H1 (cell line): ENCODE measurements at regions of chr2 and their contacts with region 1.

Region 1: GRCh38 chr2:181573140-181573736 is 83.7 kb downstream of the CERKL start:
- DNase-seq: no peak
- H3K4me3 ChIP-seq: no peak overlapping the region
- H3K27ac ChIP-seq: no peak overlapping the region
- H3K4me1 ChIP-seq: no peaks in the 10 kb centered on the region
- H3K27me3 ChIP-seq: no peaks in the 10 kb centered on the region
- CTCF ChIP-seq: peak in 2 of 3 experiments; percentile 46 to 48; a peak in 2 of 4 replicates
- EP300 ChIP-seq: no peak
- POLR2A ChIP-seq: no peak
- RAD21 ChIP-seq: peak; percentile 73 to 76

Region 2: DNA sequence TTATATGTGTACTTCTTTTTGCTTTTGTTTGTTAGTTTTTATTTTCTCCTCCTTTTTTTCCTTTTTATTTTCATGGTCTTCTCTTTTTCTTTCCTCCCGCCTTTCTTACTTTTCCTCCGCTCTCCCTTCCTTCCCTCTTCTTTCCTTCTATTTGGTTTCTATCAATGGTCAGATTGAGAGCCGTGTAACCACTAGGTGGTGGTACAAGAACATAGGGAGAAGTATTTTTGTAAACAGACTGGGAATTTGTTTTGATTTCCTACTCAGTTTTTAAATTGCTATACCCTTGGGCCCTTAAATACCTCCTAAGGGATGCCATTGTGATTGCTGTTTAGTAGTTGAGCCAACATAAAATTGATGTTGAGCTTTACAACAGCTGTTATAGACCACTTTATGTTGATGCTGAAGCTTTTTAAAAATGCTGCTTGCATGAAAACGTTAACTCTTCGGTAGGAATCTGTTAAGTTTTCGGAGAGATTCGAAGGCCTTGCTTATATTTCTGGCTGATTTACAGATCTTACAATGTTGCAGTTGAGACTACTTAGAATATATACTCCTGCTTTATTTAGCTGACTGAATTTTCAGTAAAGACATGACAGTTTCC is 468.6 kb before region 1 on chr2:
- CTCF ChIA-PET with region 1: interaction called, 10 read pairs
- POLR2A ChIA-PET with region 1: no interaction called
- DNase-seq: no peak
- H3K4me3 ChIP-seq: no peak overlapping the region
- H3K27ac ChIP-seq: no peak overlapping the region
- H3K4me1 ChIP-seq: peaks cover 0 to 5% (median 3%) of the 10 kb centered on the region in 4 experiments; a peak in 4 of 7 replicates
- H3K27me3 ChIP-seq: no peaks in the 10 kb centered on the region
- CTCF ChIP-seq: peak in 2 of 3 experiments; percentile 65 to 66; a peak in 3 of 4 replicates
- EP300 ChIP-seq: no peak
- POLR2A ChIP-seq: no peak
- RAD21 ChIP-seq: peak; percentile 87 to 88

Region 3: GRCh38 chr2:181483876-181484275 is 89.4 kb before region 1 on chr2:
- CTCF ChIA-PET with region 1: no interaction called
- POLR2A ChIA-PET with region 1: no interaction called
- DNase-seq: no peak
- H3K4me3 ChIP-seq: no peak overlapping the region
- H3K27ac ChIP-seq: no peak overlapping the region
- H3K4me1 ChIP-seq: no peaks in the 10 kb centered on the region
- H3K27me3 ChIP-seq: no peaks in the 10 kb centered on the region
- CTCF ChIP-seq: no peak
- EP300 ChIP-seq: no peak
- POLR2A ChIP-seq: no peak
- RAD21 ChIP-seq: no peak

Region 4: GRCh38 chr2:181586569-181587081 is 13.4 kb after region 1 on chr2:
- CTCF ChIA-PET with region 1: interaction called, 23 read pairs
- POLR2A ChIA-PET with region 1: no interaction called
- DNase-seq: no peak
- H3K4me3 ChIP-seq: no peak overlapping the region
- H3K27ac ChIP-seq: no peak overlapping the region
- H3K4me1 ChIP-seq: peaks cover 0 to 7% (median 0%) of the 10 kb centered on the region in 4 experiments; a peak in 2 of 7 replicates
- H3K27me3 ChIP-seq: no peaks in the 10 kb centered on the region
- CTCF ChIP-seq: no peak
- EP300 ChIP-seq: no peak
- POLR2A ChIP-seq: no peak
- RAD21 ChIP-seq: no peak

Region 5: DNA sequence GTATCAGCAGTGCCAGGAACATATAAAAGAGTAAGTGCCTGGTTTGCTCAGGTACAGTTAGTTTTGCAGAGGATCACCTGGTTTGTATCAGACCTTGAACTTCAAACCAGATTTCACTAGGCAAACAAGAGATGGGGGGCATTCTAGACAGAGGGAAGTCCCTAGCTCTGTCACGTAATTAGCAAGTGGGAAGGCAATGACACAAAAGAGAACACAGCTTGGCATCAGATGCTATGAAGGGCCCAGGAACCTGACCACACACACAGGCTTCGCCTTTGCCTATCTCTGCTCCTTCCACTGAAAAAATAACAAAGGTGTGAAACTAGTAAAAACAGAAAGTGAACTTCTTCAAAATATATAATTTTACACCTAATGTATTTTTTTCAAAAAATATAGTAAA is 21.1 kb after region 1 on chr2:
- CTCF ChIA-PET with region 1: interaction called, 10 read pairs
- POLR2A ChIA-PET with region 1: no interaction called
- DNase-seq: no peak
- H3K4me3 ChIP-seq: no peak overlapping the region
- H3K27ac ChIP-seq: no peak overlapping the region
- H3K4me1 ChIP-seq: no peaks in the 10 kb centered on the region
- H3K27me3 ChIP-seq: no peaks in the 10 kb centered on the region
- CTCF ChIP-seq: no peak
- EP300 ChIP-seq: no peak
- POLR2A ChIP-seq: no peak
- RAD21 ChIP-seq: no peak

Region 6: DNA sequence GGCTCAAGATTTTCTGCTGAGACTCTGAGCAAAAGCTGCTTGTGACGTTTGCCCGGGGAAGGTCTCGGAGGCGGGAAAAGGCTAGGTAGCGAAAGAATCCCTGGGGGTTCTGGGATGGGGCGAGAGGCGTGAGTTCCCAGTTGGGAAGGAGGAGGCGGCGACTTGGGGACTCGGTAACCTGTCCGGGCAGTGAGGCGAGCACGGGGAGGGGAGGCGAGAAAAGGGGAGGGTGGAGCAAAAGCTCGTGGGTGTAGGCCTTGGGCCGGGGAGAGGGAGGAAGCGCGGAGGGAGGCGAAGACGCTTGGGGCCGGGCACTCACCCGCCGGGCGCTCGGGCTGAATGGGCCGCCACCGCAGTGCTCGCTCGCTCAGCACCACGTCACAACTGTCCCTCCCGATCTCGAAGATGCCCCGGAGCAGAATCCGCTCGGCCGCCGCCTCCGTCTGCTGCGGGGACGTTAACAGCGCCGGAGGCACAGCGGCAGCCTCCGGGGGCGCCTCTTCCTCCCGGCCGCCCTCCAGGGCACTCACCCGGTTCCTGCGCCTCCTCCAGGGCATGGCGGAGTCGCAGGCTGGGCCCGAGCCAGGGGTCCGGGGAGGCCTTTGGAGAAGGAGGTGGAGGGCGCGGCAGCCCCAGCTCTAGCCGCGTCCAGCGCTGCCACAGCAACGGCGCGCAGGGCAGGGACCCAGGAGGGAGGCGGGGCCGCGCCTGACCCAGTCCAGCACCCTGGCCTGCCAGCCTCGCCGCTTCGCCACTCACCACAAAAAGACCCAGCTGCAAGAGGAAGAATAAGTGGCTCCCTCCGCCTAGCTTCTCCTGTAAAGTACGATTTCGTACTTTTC is 83.4 kb after region 1 on chr2 and contains the start of gene CERKL:
- CTCF ChIA-PET with region 1: interaction called, 12 read pairs
- POLR2A ChIA-PET with region 1: no interaction called
- DNase-seq: peak; percentile 66 to 83
- H3K4me3 ChIP-seq: peak within 1 kb of the TSS; percentile 41 to 79 (median 65)
- H3K27ac ChIP-seq: no peak within 1 kb of the TSS
- H3K4me1 ChIP-seq: peaks cover 4 to 11% (median 7%) of the 10 kb centered on the region in 4 experiments; a peak in 5 of 7 replicates
- H3K27me3 ChIP-seq: peaks cover 23 to 53% (median 45%) of the 10 kb centered on the region in 4 experiments
- CTCF ChIP-seq: peak in 2 of 3 experiments; percentile 3 to 27; a peak in 2 of 4 replicates
- EP300 ChIP-seq: no peak
- POLR2A ChIP-seq: no peak
- RAD21 ChIP-seq: no peak
- total RNA-seq, gene CERKL: not detected in 2 replicates

Region 7: DNA sequence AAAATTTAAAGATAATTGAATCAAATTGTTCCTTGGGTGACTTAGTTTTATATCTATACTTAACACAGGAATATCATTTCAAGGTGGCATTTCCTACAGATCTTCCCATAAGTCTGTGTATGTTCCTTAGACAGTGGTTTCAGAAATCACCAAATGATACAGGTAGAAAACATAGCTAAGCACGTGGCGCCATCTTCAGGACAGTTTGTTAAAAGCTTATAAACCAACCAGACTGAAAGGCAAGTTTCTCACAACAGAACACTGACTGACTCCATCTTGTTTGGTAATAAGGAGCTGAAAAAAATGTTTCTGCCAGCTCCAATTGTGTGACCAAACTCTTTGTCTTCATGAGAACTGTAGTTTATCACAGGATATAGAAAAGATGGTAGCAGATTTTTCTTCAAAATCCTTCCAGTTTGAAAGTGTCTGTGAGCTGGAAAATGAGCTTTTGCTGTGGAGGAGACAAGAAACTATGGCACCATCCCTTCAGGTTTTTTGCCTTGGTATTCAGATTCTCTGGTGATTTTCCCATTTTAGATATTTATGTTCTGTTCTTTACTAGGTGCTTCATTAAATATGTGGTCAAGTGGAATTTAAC is 141.9 kb after region 1 on chr2:
- CTCF ChIA-PET with region 1: interaction called, 183 read pairs
- POLR2A ChIA-PET with region 1: no interaction called
- DNase-seq: peak in 1 of 2 experiments; percentile 77
- H3K4me3 ChIP-seq: no peak overlapping the region
- H3K27ac ChIP-seq: no peak overlapping the region
- H3K4me1 ChIP-seq: no peaks in the 10 kb centered on the region
- H3K27me3 ChIP-seq: no peaks in the 10 kb centered on the region
- CTCF ChIP-seq: peak in 2 of 3 experiments; percentile 67 to 77; a peak in 3 of 4 replicates
- EP300 ChIP-seq: no peak
- POLR2A ChIP-seq: no peak
- RAD21 ChIP-seq: peak; percentile 95 to 97

Region 8: GRCh38 chr2:181723731-181724130 is 150.5 kb after region 1 on chr2:
- CTCF ChIA-PET with region 1: interaction called, 183 read pairs
- POLR2A ChIA-PET with region 1: no interaction called
- DNase-seq: no peak
- H3K4me3 ChIP-seq: no peak overlapping the region
- H3K27ac ChIP-seq: no peak overlapping the region
- H3K4me1 ChIP-seq: no peaks in the 10 kb centered on the region
- H3K27me3 ChIP-seq: no peaks in the 10 kb centered on the region
- CTCF ChIP-seq: no peak
- EP300 ChIP-seq: no peak
- POLR2A ChIP-seq: no peak
- RAD21 ChIP-seq: no peak